Mammary epithelial cell (primary cell): ENCODE measurements at regions of chr2 and their contacts with region 1.

Region 1: GRCh38 chr2:96116879-96117697 is 717 bp upstream of the ADRA2B start:
- DNase-seq: peak; percentile 53
- H3K4me3 ChIP-seq: peak overlapping the region; percentile 26 to 54 (median 52)
- H3K27ac ChIP-seq: no peak overlapping the region
- H3K4me1 ChIP-seq: peaks cover 9% of the 10 kb centered on the region
- H3K27me3 ChIP-seq: no peaks in the 10 kb centered on the region
- CTCF ChIP-seq: peak; percentile 52 to 64

Region 2: DNA sequence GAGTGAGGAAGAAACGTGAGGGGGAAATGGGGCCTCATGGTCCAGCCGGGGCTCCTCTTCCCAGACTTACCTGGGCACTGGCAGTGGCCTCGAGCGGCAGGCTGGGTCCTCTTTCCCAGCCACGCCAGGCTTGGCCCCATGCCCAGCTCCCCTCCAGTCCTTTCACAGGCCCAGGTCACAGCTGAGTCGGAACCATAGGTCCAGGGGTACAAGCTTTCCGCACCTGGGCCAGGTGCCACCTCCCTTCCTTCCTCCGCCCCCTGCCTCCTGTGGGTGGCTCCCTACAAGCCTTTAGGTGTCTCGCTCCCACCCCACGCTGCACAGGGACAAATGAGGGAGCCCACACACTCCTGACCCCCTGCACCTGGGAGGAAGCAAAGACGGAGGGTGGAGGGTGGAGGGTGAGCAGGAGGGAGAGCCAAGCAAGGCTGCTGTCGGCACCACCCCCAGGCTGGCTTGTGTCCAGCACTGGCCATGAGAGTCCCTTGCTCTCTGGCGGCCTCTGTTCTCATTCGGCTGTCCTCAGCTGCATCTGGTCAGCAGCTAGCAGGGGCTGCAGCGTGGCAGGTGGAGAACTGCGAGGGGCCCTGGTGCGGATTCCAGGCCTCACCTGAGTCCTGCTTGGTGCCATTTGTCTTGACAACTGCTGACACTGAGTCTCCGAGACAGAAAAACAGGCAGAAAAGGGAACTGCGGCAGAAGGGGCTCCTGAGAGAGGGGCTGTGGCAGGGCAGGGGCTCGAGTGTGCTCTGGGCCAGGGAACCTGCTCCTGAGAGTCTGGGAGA is 27.5 kb before region 1 on chr2:
- CTCF ChIA-PET with region 1: no interaction called
- dilution Hi-C with region 1: loop called (anchors 5 kb)
- in situ Hi-C with region 1: no loop called
- intact Hi-C with region 1: no loop called
- DNase-seq: no peak
- H3K4me3 ChIP-seq: no peak overlapping the region
- H3K27ac ChIP-seq: no peak overlapping the region
- H3K4me1 ChIP-seq: no peaks in the 10 kb centered on the region
- H3K27me3 ChIP-seq: peaks cover 2% of the 10 kb centered on the region
- CTCF ChIP-seq: no peak

Region 3: GRCh38 chr2:96102596-96103186 is 14.4 kb before region 1 on chr2:
- CTCF ChIA-PET with region 1: interaction called, 13 read pairs
- dilution Hi-C with region 1: no loop called
- in situ Hi-C with region 1: no loop called
- intact Hi-C with region 1: no loop called
- DNase-seq: no peak
- H3K4me3 ChIP-seq: no peak overlapping the region
- H3K27ac ChIP-seq: no peak overlapping the region
- H3K4me1 ChIP-seq: peaks cover 9% of the 10 kb centered on the region
- H3K27me3 ChIP-seq: no peaks in the 10 kb centered on the region
- CTCF ChIP-seq: no peak

Region 4: DNA sequence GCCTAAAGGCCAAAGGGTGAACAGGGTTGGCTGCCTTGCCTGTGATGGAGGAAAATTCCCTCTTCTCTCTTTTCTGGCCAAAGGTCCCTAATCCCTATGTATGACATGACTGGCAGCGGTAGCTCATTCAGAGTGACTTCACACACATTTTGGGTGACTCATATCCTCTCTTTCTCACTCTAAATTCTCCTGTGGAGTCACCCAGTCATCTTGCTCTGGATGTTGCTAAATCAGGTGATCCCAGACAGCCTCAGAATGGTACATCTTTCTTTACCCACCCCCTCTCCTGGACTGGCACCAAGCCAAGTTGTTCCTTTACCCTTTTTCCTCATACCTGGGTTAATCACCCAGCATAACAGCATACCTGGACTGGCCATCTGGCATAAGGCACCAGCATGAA is 310.8 kb after region 1 on chr2:
- CTCF ChIA-PET with region 1: no interaction called
- dilution Hi-C with region 1: no loop called
- in situ Hi-C with region 1: no loop called
- intact Hi-C with region 1: no loop called
- DNase-seq: peak; percentile 96
- H3K4me3 ChIP-seq: no peak overlapping the region
- H3K27ac ChIP-seq: no peak overlapping the region
- H3K4me1 ChIP-seq: peaks cover 20% of the 10 kb centered on the region
- H3K27me3 ChIP-seq: no peaks in the 10 kb centered on the region
- CTCF ChIP-seq: no peak